CD4-positive, alpha-beta T cell (primary cell): ENCODE measurements at regions of chr6 and their contacts with region 1.

Region 1: DNA sequence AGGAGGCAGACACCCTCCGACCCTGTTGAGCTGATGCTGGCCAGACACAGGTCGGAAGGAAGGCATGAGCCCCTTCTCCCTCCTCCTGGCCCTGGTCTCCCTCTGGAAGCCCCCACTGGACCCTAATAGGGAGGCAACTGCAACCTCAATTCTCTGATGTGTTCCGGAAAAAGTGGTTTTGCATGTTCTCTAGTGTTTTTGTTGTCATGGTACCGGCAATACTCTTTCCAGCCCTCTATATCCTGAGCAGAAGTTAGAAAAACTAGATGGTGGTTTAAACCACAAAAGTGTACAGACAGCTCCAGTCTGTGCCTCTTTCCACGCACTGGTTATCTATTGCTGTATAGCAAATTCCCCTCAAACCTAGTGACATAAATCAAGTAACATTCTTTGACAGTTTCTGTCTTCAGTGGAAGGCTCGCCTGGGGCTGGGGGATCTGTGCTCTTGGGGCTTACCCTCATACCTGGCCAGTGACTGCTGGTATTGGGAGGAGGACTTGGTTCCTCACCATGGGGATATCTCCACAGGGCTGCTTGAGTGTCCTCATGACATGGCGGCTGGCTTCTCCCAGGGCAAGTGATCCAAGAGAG is 37.0 kb downstream of the SYTL3 start:
- DNase-seq: peak in 11 of 14 experiments; percentile 7 to 92 (median 49)
- ATAC-seq: peak; percentile 94
- H3K4me3 ChIP-seq: peak overlapping the region; percentile 13
- H3K4me3 Mint-ChIP-seq: peak overlapping the region; percentile 22
- H3K27ac ChIP-seq: peak overlapping the region; percentile 76 to 89
- H3K27ac Mint-ChIP-seq: peak overlapping the region; percentile 95
- H3K4me1 ChIP-seq: peaks cover 58% of the 10 kb centered on the region
- H3K4me1 Mint-ChIP-seq: peaks cover 54% of the 10 kb centered on the region
- H3K27me3 ChIP-seq: no peaks in the 10 kb centered on the region
- H3K27me3 Mint-ChIP-seq: no peaks in the 10 kb centered on the region
- CTCF ChIP-seq: no peak

Region 2: GRCh38 chr6:158213925-158214674 is 472.8 kb before region 1 on chr6:
- CTCF ChIA-PET with region 1: interaction called, 4 read pairs
- POLR2A ChIA-PET with region 1: no interaction called
- intact Hi-C with region 1: loop called in 1 of 2 experiments (anchors 1 kb)
- DNase-seq: peak; percentile 26 to 81 (median 37)
- ATAC-seq: peak; percentile 97
- H3K4me3 ChIP-seq: no peak overlapping the region
- H3K4me3 Mint-ChIP-seq: no peak overlapping the region
- H3K27ac ChIP-seq: no peak overlapping the region
- H3K27ac Mint-ChIP-seq: no peak overlapping the region
- H3K4me1 ChIP-seq: no peaks in the 10 kb centered on the region
- H3K4me1 Mint-ChIP-seq: peaks cover under 1% of the 10 kb centered on the region
- H3K27me3 ChIP-seq: no peaks in the 10 kb centered on the region
- H3K27me3 Mint-ChIP-seq: peaks cover under 1% of the 10 kb centered on the region
- CTCF ChIP-seq: peak; percentile 79

Region 3: GRCh38 chr6:158303210-158303731 is 383.6 kb before region 1 on chr6:
- CTCF ChIA-PET with region 1: no interaction called
- POLR2A ChIA-PET with region 1: no interaction called
- intact Hi-C with region 1: no loop called
- DNase-seq: no peak
- ATAC-seq: no peak
- H3K4me3 ChIP-seq: no peak overlapping the region
- H3K4me3 Mint-ChIP-seq: no peak overlapping the region
- H3K27ac ChIP-seq: no peak overlapping the region
- H3K27ac Mint-ChIP-seq: no peak overlapping the region
- H3K4me1 ChIP-seq: no peaks in the 10 kb centered on the region
- H3K4me1 Mint-ChIP-seq: peaks cover 9% of the 10 kb centered on the region
- H3K27me3 ChIP-seq: no peaks in the 10 kb centered on the region
- H3K27me3 Mint-ChIP-seq: no peaks in the 10 kb centered on the region
- CTCF ChIP-seq: no peak

Region 4: DNA sequence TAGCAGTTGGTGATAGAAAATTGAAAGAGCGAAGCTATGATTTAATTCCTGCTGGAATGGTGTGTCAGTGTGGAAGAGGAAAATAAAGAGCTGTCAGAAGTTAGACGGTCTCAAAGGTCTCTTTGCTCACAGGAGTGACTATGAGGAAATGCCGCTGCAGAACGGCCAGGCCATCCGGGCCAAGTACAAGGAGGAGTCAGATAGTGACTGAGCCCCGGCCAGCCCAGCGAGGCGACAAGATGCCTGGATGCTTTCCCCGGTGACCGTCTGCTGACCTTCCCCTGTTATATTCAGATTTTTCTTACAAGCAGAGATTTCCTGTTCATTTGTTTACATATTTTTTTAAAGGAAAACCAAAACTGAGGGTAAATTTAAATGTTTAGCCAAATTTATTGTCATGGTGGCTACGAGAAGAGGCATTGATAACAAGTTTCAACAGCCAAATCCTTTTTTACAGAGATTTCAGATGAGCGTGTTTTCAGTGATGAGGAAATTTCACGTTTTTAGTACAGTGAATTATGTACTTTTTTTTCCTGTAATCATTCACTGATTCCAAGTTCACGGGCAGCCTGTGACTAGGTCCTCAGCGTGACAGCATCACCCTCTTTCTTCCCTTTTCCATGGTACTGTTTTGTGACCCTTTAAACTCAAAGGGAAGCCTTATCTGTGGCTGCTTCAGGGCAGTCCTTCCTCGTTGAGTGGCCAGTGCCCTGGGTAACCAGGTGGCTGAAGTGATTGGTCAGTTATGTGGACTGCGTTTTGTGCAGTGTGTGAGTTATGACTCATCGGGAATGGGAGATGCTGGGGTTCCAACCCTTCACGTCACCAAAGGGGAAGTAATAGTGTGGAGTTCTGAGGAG is 55.0 kb before region 1 on chr6:
- CTCF ChIA-PET with region 1: interaction called, 21 read pairs
- POLR2A ChIA-PET with region 1: no interaction called
- intact Hi-C with region 1: loop called (anchors 1 to 2 kb)
- DNase-seq: peak in 2 of 14 experiments; percentile 44 to 52
- ATAC-seq: no peak
- H3K4me3 ChIP-seq: no peak overlapping the region
- H3K4me3 Mint-ChIP-seq: no peak overlapping the region
- H3K27ac ChIP-seq: peak overlapping the region; percentile 15 to 26
- H3K27ac Mint-ChIP-seq: peak overlapping the region; percentile 79
- H3K4me1 ChIP-seq: peaks cover 29% of the 10 kb centered on the region
- H3K4me1 Mint-ChIP-seq: peaks cover 49% of the 10 kb centered on the region
- H3K27me3 ChIP-seq: no peaks in the 10 kb centered on the region
- H3K27me3 Mint-ChIP-seq: no peaks in the 10 kb centered on the region
- CTCF ChIP-seq: no peak

Region 5: GRCh38 chr6:158644231-158645063 is 42.4 kb before region 1 on chr6 and contains the start of gene DYNLT1:
- CTCF ChIA-PET with region 1: interaction called, 22 read pairs
- POLR2A ChIA-PET with region 1: interaction called, 14 read pairs
- intact Hi-C with region 1: loop called in 1 of 2 experiments (anchors 1 kb)
- DNase-seq: peak; percentile 73 to 92 (median 84)
- ATAC-seq: peak; percentile 63
- H3K4me3 ChIP-seq: peak within 1 kb of the TSS; percentile 82
- H3K4me3 Mint-ChIP-seq: peak within 1 kb of the TSS; percentile 100
- H3K27ac ChIP-seq: peak within 1 kb of the TSS; percentile 85 to 93
- H3K27ac Mint-ChIP-seq: peak within 1 kb of the TSS; percentile 97
- H3K4me1 ChIP-seq: peaks cover 53% of the 10 kb centered on the region
- H3K4me1 Mint-ChIP-seq: peaks cover 67% of the 10 kb centered on the region
- H3K27me3 ChIP-seq: no peaks in the 10 kb centered on the region
- H3K27me3 Mint-ChIP-seq: no peaks in the 10 kb centered on the region
- CTCF ChIP-seq: no peak
- total RNA-seq, gene DYNLT1: 170 to 182 TPM

Region 6: GRCh38 chr6:158649289-158650143 is 37.4 kb before region 1 on chr6 and contains the start of gene SYTL3:
- CTCF ChIA-PET with region 1: interaction called, 22 read pairs
- POLR2A ChIA-PET with region 1: interaction called, 14 read pairs
- intact Hi-C with region 1: loop called in 1 of 2 experiments (anchors 1 kb)
- DNase-seq: peak in 13 of 14 experiments; percentile 39 to 95 (median 70)
- ATAC-seq: peak; percentile 60
- H3K4me3 ChIP-seq: peak within 1 kb of the TSS; percentile 43
- H3K4me3 Mint-ChIP-seq: peak within 1 kb of the TSS; percentile 85
- H3K27ac ChIP-seq: peak within 1 kb of the TSS; percentile 60
- H3K27ac Mint-ChIP-seq: peak within 1 kb of the TSS; percentile 91
- H3K4me1 ChIP-seq: peaks cover 67% of the 10 kb centered on the region
- H3K4me1 Mint-ChIP-seq: peaks cover 60% of the 10 kb centered on the region
- H3K27me3 ChIP-seq: no peaks in the 10 kb centered on the region
- H3K27me3 Mint-ChIP-seq: no peaks in the 10 kb centered on the region
- CTCF ChIP-seq: no peak
- total RNA-seq, gene SYTL3: 41.2 to 42.7 TPM

Region 7: DNA sequence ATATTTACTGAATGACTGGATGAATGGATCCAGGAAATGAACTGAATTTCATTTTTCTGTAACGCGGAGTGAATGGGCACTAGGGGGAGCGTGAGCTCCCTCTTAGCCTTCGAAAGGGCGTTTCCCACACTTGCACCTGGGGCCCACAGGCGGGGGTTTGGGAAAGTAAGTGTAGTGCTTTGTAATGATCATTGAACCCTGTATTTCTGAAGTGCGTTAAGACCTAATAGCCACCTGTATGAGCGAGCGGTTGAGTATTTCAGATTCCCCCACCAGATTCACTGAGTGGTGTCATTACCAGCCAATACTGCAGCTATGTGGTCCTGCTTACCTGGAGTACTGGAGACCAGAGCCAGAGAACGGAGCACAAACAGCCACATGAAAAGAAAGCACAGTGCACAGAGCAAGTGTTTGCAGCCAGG is 26.5 kb before region 1 on chr6:
- CTCF ChIA-PET with region 1: interaction called, 52 read pairs
- POLR2A ChIA-PET with region 1: interaction called, 9 read pairs
- intact Hi-C with region 1: loop called (anchors 1 to 5 kb)
- DNase-seq: peak in 13 of 14 experiments; percentile 25 to 83 (median 53)
- ATAC-seq: peak; percentile 81
- H3K4me3 ChIP-seq: no peak overlapping the region
- H3K4me3 Mint-ChIP-seq: peak overlapping the region; percentile 38
- H3K27ac ChIP-seq: no peak overlapping the region
- H3K27ac Mint-ChIP-seq: peak overlapping the region; percentile 84
- H3K4me1 ChIP-seq: peaks cover 32% of the 10 kb centered on the region
- H3K4me1 Mint-ChIP-seq: peaks cover 52% of the 10 kb centered on the region
- H3K27me3 ChIP-seq: no peaks in the 10 kb centered on the region
- H3K27me3 Mint-ChIP-seq: no peaks in the 10 kb centered on the region
- CTCF ChIP-seq: peak; percentile 83

Region 8: DNA sequence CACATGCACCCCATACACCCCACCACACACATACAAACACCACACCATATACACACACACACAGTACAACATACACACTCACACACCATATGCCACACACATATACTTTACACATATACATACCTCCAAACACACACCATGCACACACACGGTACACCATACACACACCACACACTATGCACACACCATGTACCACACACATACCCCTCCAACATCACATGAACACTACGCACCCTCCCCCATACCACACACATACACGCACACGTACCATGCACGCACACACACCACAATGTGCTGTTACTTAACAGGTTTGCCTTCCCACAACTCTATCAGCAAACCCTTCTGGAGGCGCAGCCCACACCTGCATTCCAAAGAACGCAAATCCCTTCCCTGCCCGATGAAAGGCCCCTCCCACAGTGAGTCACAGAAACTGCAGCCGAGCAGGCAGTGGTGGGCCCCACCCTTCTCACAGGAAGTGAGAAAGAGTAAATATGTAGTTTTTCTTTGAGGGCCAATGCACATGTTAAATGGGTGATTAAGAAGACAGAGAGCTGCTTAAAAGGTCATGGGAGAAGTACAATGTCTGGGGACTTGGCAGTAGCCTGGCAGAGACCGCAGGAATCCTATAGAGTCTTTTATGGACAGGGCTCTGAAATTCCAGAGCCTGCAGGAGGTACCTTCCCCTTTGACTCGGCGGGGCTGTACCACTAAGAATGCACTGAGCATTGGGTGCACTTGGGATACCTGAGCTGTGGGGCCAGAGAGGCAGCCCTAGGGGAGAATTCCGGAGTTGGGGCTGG is 166.4 kb after region 1 on chr6:
- CTCF ChIA-PET with region 1: no interaction called
- POLR2A ChIA-PET with region 1: no interaction called
- intact Hi-C with region 1: no loop called
- DNase-seq: peak; percentile 73 to 97 (median 86)
- ATAC-seq: peak; percentile 70
- H3K4me3 ChIP-seq: peak overlapping the region; percentile 53
- H3K4me3 Mint-ChIP-seq: no peak overlapping the region
- H3K27ac ChIP-seq: peak overlapping the region; percentile 86 to 97
- H3K27ac Mint-ChIP-seq: no peak overlapping the region
- H3K4me1 ChIP-seq: peaks cover 67% of the 10 kb centered on the region
- H3K4me1 Mint-ChIP-seq: peaks cover 27% of the 10 kb centered on the region
- H3K27me3 ChIP-seq: no peaks in the 10 kb centered on the region
- H3K27me3 Mint-ChIP-seq: no peaks in the 10 kb centered on the region
- CTCF ChIP-seq: no peak

Region 9: GRCh38 chr6:159193923-159194322 is 507.0 kb after region 1 on chr6:
- CTCF ChIA-PET with region 1: no interaction called
- POLR2A ChIA-PET with region 1: no interaction called
- intact Hi-C with region 1: no loop called
- DNase-seq: no peak
- ATAC-seq: no peak
- H3K4me3 ChIP-seq: no peak overlapping the region
- H3K4me3 Mint-ChIP-seq: no peak overlapping the region
- H3K27ac ChIP-seq: no peak overlapping the region
- H3K27ac Mint-ChIP-seq: no peak overlapping the region
- H3K4me1 ChIP-seq: no peaks in the 10 kb centered on the region
- H3K4me1 Mint-ChIP-seq: no peaks in the 10 kb centered on the region
- H3K27me3 ChIP-seq: peaks cover 0 to 10% of the 10 kb centered on the region in 2 experiments
- H3K27me3 Mint-ChIP-seq: peaks cover 30% of the 10 kb centered on the region
- CTCF ChIP-seq: no peak